GM12878 (cell line): ENCODE measurements at regions of chr6 and their contacts with region 1.

Region 1: DNA sequence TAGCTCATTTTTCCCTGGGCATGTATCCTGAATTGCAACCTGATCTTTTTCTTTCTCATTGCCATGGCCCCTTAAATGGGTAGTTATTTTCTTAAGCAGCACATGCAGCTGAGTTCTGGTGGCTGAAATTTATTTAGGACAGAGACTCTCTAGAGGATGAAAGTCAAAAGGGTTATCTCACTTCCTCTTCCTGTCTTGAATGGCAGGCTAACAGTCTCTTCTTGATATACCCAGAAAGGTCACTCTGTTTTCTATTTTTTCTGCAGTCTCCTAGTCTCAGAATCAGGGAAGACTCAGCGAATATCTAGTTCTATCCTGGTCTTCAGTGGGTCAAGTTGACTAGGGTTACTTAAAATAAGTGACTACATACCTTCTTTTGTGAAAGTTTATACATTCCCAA is 243.3 kb downstream of the EPHA7 start:
- DNase-seq: peak; percentile 19
- ATAC-seq: peak; percentile 94
- H3K4me3 ChIP-seq: no peak overlapping the region
- H3K27ac ChIP-seq: no peak overlapping the region
- H3K4me1 ChIP-seq: no peaks in the 10 kb centered on the region
- H3K27me3 ChIP-seq: no peaks in the 10 kb centered on the region
- CTCF ChIP-seq: no peak
- EP300 ChIP-seq: 0 out of 4 replicates have a peak, but pooled peaks of 1 of the 2 experiments have one; percentile 13
- POLR2A ChIP-seq: no peak
- RAD21 ChIP-seq: no peak

Region 2: DNA sequence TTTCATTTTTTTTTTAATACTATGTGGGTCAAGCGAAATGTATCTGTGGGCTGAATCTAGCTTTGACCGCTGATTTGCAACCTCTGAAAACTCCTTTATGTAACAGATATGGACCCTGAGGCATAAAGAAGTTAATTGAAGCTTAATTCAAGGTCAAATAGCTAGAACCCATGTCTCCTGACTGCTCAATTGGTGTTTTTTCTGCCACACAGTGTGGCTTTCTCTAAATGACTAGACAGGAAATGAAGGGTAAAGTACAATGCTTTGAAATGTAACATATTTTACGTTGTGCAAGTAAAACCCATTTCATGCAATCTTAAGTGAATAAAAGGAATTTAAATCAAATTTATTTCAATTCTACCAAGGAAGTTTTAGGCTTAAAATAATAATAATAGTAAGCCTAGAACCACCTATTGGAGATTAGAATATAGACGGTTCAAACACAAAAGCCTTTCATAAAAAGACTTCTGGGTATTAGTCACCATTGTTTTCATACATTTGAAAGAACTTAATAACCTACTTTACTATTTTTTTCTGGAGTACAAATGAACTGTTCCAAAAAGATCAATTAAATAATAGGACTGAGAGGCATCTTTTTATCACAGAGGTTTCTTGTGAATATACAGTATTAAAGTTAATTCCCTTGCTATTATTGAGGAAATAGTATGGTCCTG is 36.5 kb before region 1 on chr6:
- CTCF ChIA-PET with region 1: interaction called, 5 read pairs
- POLR2A ChIA-PET with region 1: interaction called, 4 read pairs
- RAD21 ChIA-PET with region 1: interaction called, 17 read pairs
- SMC1A ChIA-PET with region 1: interaction called, 12 read pairs
- in situ Hi-C with region 1: no loop called
- intact Hi-C with region 1: no loop called
- DNase-seq: no peak
- ATAC-seq: peak; percentile 97
- H3K4me3 ChIP-seq: no peak overlapping the region
- H3K27ac ChIP-seq: no peak overlapping the region
- H3K4me1 ChIP-seq: no peaks in the 10 kb centered on the region
- H3K27me3 ChIP-seq: no peaks in the 10 kb centered on the region
- CTCF ChIP-seq: no peak
- EP300 ChIP-seq: peak in 1 of 2 experiments; percentile 73; a peak in 2 of 4 replicates
- POLR2A ChIP-seq: no peak
- RAD21 ChIP-seq: no peak

Region 3: GRCh38 chr6:93164781-93165180 is 11.3 kb before region 1 on chr6:
- CTCF ChIA-PET with region 1: interaction called, 5 read pairs
- POLR2A ChIA-PET with region 1: interaction called, 3 read pairs
- RAD21 ChIA-PET with region 1: interaction called, 21 read pairs
- SMC1A ChIA-PET with region 1: interaction called, 10 read pairs
- in situ Hi-C with region 1: no loop called
- intact Hi-C with region 1: no loop called
- DNase-seq: no peak
- ATAC-seq: no peak
- H3K4me3 ChIP-seq: no peak overlapping the region
- H3K27ac ChIP-seq: no peak overlapping the region
- H3K4me1 ChIP-seq: no peaks in the 10 kb centered on the region
- H3K27me3 ChIP-seq: no peaks in the 10 kb centered on the region
- CTCF ChIP-seq: no peak
- EP300 ChIP-seq: no peak
- POLR2A ChIP-seq: no peak
- RAD21 ChIP-seq: no peak

Region 4: GRCh38 chr6:93341900-93342613 is 166.0 kb after region 1 on chr6:
- CTCF ChIA-PET with region 1: no interaction called
- POLR2A ChIA-PET with region 1: no interaction called
- RAD21 ChIA-PET with region 1: no interaction called
- SMC1A ChIA-PET with region 1: no interaction called
- in situ Hi-C with region 1: no loop called
- intact Hi-C with region 1: no loop called
- DNase-seq: no peak
- ATAC-seq: no peak
- H3K4me3 ChIP-seq: no peak overlapping the region
- H3K27ac ChIP-seq: no peak overlapping the region
- H3K4me1 ChIP-seq: no peaks in the 10 kb centered on the region
- H3K27me3 ChIP-seq: no peaks in the 10 kb centered on the region
- CTCF ChIP-seq: no peak
- EP300 ChIP-seq: no peak
- POLR2A ChIP-seq: no peak
- RAD21 ChIP-seq: no peak